Spleen (tissue), 13 donors: ENCODE measurements at regions of chr3 and their contacts with region 1.

Region 1: GRCh38 chr3:169744366-169745054 is 20.4 kb downstream of the TERC start:
- DNase-seq: no peak
- H3K4me3 ChIP-seq: no peak overlapping the region
- H3K27ac ChIP-seq: no peak overlapping the region
- H3K4me1 ChIP-seq: no peaks in the 10 kb centered on the region
- H3K27me3 ChIP-seq: peaks cover 0 to 21% (median 0%) of the 10 kb centered on the region in 7 donors
- CTCF ChIP-seq: peak in 1 of 11 experiments; percentile 7
- POLR2A ChIP-seq: no peak

Region 2: DNA sequence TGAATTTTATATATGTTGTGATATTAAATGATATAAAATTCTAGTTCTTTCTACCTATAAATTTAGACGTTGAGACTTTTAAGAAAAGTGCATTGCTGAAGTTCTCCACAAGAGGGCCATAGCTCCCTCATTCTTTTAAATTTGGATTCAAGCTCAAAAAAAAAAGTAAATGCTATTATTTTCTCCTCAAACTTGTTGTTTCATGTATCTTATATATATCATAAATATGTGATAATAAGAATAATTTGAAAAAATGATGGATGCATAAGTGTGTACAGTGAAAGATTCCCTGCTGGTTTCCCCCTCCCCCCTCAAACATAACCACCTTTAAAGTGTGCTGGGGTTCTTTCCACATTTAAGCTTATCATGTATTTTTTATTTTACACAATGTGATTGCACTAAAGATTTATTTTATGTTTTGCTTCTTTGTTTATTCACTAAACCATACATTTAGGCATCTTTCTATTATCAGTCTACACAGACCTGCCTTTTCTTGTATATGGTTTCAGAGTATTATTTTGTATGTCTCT is 879.4 kb before region 1 on chr3:
- intact Hi-C with region 1: loop called (anchors 10 kb)
- DNase-seq: no peak
- H3K4me3 ChIP-seq: no peak overlapping the region
- H3K27ac ChIP-seq: no peak overlapping the region
- H3K4me1 ChIP-seq: no peaks in the 10 kb centered on the region
- H3K27me3 ChIP-seq: peaks cover 0 to 4% (median 0%) of the 10 kb centered on the region in 7 donors
- CTCF ChIP-seq: peak in 9 of 11 experiments; percentile 14 to 62 (median 52)
- POLR2A ChIP-seq: no peak

Region 3: DNA sequence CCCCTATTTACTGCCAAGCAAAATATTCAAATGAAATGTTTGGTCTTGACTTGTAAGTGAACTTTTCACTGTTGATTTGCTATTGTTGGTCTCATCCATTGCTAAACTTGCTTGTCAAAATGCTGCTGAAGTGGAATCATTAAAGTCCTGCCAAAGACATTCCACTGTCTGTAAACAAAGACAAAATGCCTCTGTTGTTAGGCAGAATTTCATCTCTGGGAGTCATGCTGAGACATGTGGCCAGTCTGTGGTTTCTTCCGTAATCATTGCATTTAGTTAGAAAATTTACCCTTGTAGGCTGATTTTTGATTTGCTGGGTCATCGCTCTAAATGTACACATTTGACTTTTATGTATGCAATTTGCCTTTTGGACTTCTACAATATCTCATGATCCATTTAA is 658.7 kb before region 1 on chr3:
- intact Hi-C with region 1: no loop called
- DNase-seq: no peak
- H3K4me3 ChIP-seq: no peak overlapping the region
- H3K27ac ChIP-seq: no peak overlapping the region
- H3K4me1 ChIP-seq: no peaks in the 10 kb centered on the region
- H3K27me3 ChIP-seq: no peaks in the 10 kb centered on the region
- CTCF ChIP-seq: no peak
- POLR2A ChIP-seq: no peak